AG04450 (cell line): ENCODE measurements at regions of chr15 and their contacts with region 1.

Region 1: GRCh38 chr15:33086507-33087121 is 107.9 kb downstream of the FMN1 start:
- DNase-seq: no peak
- H3K4me3 ChIP-seq: no peak overlapping the region
- H3K27ac ChIP-seq: no peak overlapping the region
- H3K27me3 ChIP-seq: no peaks in the 10 kb centered on the region
- CTCF ChIP-seq: peak; percentile 70

Region 2: DNA sequence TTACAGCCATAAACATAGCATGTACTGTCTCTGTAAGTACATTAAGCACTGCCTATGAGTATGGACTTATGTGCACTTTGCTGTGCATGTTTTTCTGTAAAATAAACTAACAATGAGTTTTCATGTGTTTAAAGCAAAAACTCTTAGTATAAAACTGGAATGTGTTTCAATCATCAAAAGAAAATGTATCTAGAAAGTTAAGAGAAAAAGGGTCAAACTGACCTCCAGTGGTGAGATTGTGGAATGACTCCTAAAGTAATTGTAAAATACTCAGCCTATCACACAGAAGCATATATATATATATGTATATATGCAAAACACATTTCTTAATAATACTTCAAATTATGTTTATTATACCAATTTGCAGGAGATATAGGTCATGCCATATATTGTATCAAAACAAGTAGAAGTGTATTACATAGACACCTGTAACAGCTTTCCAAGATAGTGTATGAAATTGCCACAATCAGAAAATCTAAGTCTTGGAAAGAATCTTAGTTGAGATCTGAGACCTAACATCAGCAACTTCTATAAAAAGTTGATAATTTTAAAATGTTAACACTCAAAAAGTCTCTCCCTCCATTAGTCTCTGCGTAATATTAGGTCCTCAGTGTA is 91.7 kb before region 1 on chr15:
- CTCF ChIA-PET with region 1: no interaction called
- POLR2A ChIA-PET with region 1: no interaction called
- DNase-seq: no peak
- H3K4me3 ChIP-seq: no peak overlapping the region
- H3K27ac ChIP-seq: no peak overlapping the region
- H3K27me3 ChIP-seq: no peaks in the 10 kb centered on the region
- CTCF ChIP-seq: peak; percentile 70

Region 3: GRCh38 chr15:33021806-33022389 is 64.7 kb before region 1 on chr15:
- CTCF ChIA-PET with region 1: interaction called, 21 read pairs
- POLR2A ChIA-PET with region 1: no interaction called
- DNase-seq: peak; percentile 34
- H3K4me3 ChIP-seq: no peak overlapping the region
- H3K27ac ChIP-seq: peak overlapping the region; percentile 63
- H3K27me3 ChIP-seq: no peaks in the 10 kb centered on the region
- CTCF ChIP-seq: peak; percentile 66

Region 4: DNA sequence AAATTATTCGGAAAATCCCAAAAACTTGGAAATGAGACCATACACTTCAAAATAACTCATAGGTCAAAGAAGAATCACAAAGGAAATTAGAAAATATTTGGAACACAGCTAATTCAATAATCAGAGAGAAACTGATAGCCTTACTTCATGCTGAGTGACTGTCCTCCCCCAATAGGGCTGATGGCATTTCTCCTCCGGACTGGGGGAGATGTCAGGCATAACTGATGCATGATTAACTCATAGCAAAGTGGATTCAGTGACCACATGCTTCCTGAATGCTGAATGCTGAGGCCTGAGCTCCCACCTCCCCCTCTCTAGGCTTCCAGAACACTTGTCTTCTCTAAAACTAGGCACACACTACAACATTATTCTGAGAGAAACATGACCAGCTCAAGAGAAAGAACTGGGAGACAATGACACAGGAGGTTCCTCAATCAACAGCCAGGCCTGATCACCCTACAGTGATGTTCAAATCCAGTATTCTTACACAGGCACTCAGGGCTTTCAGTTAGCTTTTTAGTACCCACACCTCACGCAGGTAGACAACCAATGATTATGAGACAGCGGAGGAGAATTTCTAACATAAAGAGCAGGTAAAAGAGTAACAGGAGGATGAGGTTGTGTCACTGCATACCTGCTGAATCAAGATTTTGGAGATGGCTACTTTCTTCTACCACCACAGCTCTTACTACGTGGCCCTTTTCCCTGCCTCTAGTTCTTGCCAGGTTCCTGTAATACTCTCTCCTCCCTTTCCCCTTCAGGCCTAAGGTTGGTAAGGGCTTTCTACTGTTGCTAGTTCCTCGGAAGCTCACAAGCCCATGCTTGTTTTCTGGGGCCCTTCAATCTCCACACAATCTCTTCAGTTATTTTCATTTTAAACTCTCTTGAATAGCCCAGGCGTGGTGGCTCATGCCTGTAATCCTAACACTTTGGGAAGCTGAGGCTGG is 11.8 kb after region 1 on chr15:
- CTCF ChIA-PET with region 1: interaction called, 16 read pairs
- POLR2A ChIA-PET with region 1: no interaction called
- DNase-seq: no peak
- H3K4me3 ChIP-seq: no peak overlapping the region
- H3K27ac ChIP-seq: peak overlapping the region; percentile 77
- H3K27me3 ChIP-seq: no peaks in the 10 kb centered on the region
- CTCF ChIP-seq: no peak

Region 5: GRCh38 chr15:33124279-33124678 is 37.7 kb after region 1 on chr15:
- CTCF ChIA-PET with region 1: interaction called, 18 read pairs
- POLR2A ChIA-PET with region 1: no interaction called
- DNase-seq: no peak
- H3K4me3 ChIP-seq: no peak overlapping the region
- H3K27ac ChIP-seq: no peak overlapping the region
- H3K27me3 ChIP-seq: no peaks in the 10 kb centered on the region
- CTCF ChIP-seq: no peak

Region 6: GRCh38 chr15:33292717-33293307 is 206.2 kb after region 1 on chr15:
- CTCF ChIA-PET with region 1: interaction called, 11 read pairs
- POLR2A ChIA-PET with region 1: no interaction called
- DNase-seq: peak; percentile 10
- H3K4me3 ChIP-seq: no peak overlapping the region
- H3K27ac ChIP-seq: no peak overlapping the region
- H3K27me3 ChIP-seq: peaks cover 7% of the 10 kb centered on the region
- CTCF ChIP-seq: peak; percentile 70

Region 7: GRCh38 chr15:34122771-34123183 is 1036.2 kb after region 1 on chr15:
- CTCF ChIA-PET with region 1: no interaction called
- POLR2A ChIA-PET with region 1: no interaction called
- DNase-seq: peak; percentile 78
- H3K4me3 ChIP-seq: no peak overlapping the region
- H3K27ac ChIP-seq: peak overlapping the region; percentile 58
- H3K27me3 ChIP-seq: no peaks in the 10 kb centered on the region
- CTCF ChIP-seq: no peak